MCF 10A (cell line): ENCODE measurements at regions of chr2 and their contacts with region 1.

Region 1: DNA sequence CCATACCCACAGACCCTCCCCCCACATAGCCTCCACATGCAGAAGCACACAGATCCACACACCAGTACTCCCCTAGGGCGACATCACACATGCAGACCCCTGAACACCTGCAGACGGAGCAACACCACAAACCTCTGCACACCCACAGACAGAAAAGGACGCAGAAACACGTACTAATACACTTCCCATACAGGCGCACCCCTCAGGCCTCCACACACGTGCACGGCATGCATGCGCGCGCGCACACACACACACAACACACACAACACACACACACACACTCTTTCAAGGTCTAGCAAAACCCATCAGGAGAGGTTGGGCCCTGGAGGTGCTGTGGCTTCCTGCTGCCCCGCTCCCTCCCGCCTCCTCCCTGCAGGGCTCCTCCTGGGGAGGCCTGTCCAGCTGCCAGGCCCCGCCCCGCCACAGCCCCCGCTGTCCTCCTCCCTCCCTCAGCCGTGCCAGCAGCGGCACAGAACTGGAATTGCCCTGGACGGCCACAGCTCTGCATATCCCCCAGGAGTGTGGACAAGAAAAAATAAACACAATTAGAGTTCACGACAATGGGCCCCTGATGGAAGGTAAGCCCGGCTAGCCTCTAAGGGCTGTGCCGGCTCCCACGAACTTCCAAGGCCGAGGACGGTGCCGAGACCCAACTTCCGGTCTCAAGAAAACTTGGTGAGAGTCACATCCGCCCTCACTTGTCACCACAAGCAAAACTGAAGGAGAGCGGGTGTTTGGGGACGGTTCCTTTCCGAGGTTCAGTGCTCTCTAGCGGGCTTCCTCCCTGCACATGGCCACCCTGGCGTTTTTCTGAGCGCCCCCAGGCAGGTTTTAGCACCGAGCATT is 6.8 kb downstream of the ZFP36L2 start:
- DNase-seq: peak; percentile 88
- H3K4me3 Mint-ChIP-seq: peak overlapping the region; percentile 93
- H3K27ac Mint-ChIP-seq: peak overlapping the region; percentile 83
- H3K4me1 Mint-ChIP-seq: peaks cover 22% of the 10 kb centered on the region
- H3K27me3 Mint-ChIP-seq: no peaks in the 10 kb centered on the region
- CTCF ChIP-seq: no peak

Region 2: GRCh38 chr2:42844901-42845821 is 374.4 kb before region 1 on chr2:
- CTCF ChIA-PET with region 1: no interaction called
- POLR2A ChIA-PET with region 1: no interaction called
- intact Hi-C with region 1: no loop called
- DNase-seq: no peak
- H3K4me3 Mint-ChIP-seq: no peak overlapping the region
- H3K27ac Mint-ChIP-seq: peak overlapping the region; percentile 32
- H3K4me1 Mint-ChIP-seq: peaks cover 6% of the 10 kb centered on the region
- H3K27me3 Mint-ChIP-seq: no peaks in the 10 kb centered on the region
- CTCF ChIP-seq: no peak

Region 3: DNA sequence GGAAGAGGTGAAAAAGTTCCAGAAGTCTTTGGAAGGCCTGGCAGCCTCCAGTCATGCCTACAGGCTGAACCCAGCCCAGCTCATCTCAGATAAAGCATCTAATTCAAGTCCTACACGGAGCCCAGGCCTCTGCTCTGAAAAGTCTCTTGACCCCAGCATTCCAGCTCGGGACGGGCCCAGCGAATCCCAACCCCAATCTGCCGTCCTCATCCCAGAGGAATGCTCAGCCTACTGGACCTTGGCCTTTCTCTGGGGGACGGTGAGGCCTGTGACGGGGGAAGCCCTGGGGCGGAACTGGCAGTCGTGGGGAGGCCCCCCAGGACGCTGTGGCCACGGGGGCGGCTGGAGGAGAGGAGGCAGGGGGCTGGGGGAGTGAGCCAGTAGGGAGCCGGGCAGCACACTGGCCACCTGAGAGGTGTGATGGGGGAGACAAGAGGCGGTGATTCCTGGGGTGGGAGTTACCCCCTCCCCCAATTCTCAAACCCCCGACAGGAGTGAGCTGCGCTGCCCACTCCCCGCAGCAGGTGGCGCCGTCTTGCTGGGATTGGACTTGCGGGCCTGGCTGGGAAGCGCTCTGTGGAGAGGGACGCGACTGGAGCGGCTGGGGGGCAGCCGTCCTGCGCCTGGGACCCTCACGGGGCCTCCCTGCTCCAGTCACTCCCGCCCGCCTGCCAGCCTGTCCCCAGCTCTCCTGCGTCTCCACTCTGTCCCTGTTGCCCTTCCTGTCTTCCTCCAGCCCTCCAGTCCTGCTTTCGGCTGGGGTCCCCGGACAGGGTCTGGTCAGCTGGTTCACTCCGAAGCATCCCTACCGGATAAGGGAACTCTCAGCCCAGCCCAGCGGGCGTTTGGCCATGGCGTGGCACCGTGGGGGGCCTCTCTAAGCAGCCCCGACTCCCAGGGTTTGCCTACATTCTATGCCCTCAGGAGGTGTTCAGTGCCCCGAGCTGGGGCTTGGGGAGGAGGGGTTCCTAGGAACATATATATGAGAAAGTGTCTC is 244.6 kb before region 1 on chr2:
- CTCF ChIA-PET with region 1: interaction called, 23 read pairs
- POLR2A ChIA-PET with region 1: interaction called, 11 read pairs
- intact Hi-C with region 1: no loop called
- DNase-seq: peak; percentile 64
- H3K4me3 Mint-ChIP-seq: no peak overlapping the region
- H3K27ac Mint-ChIP-seq: peak overlapping the region; percentile 52
- H3K4me1 Mint-ChIP-seq: peaks cover 38% of the 10 kb centered on the region
- H3K27me3 Mint-ChIP-seq: no peaks in the 10 kb centered on the region
- CTCF ChIP-seq: peak; percentile 95

Region 4: GRCh38 chr2:43024515-43025011 is 195.0 kb before region 1 on chr2:
- CTCF ChIA-PET with region 1: interaction called, 4 read pairs
- POLR2A ChIA-PET with region 1: interaction called, 8 read pairs
- intact Hi-C with region 1: loop called (anchors 2 kb)
- DNase-seq: peak; percentile 75
- H3K4me3 Mint-ChIP-seq: no peak overlapping the region
- H3K27ac Mint-ChIP-seq: no peak overlapping the region
- H3K4me1 Mint-ChIP-seq: peaks cover 29% of the 10 kb centered on the region
- H3K27me3 Mint-ChIP-seq: no peaks in the 10 kb centered on the region
- CTCF ChIP-seq: peak; percentile 75

Region 5: GRCh38 chr2:43086451-43087221 is 133.0 kb before region 1 on chr2:
- CTCF ChIA-PET with region 1: interaction called, 4 read pairs
- POLR2A ChIA-PET with region 1: interaction called, 54 read pairs
- intact Hi-C with region 1: loop called (anchors 5 kb)
- DNase-seq: peak; percentile 98
- H3K4me3 Mint-ChIP-seq: peak overlapping the region; percentile 48
- H3K27ac Mint-ChIP-seq: peak overlapping the region; percentile 94
- H3K4me1 Mint-ChIP-seq: peaks cover 60% of the 10 kb centered on the region
- H3K27me3 Mint-ChIP-seq: no peaks in the 10 kb centered on the region
- CTCF ChIP-seq: no peak

Region 6: DNA sequence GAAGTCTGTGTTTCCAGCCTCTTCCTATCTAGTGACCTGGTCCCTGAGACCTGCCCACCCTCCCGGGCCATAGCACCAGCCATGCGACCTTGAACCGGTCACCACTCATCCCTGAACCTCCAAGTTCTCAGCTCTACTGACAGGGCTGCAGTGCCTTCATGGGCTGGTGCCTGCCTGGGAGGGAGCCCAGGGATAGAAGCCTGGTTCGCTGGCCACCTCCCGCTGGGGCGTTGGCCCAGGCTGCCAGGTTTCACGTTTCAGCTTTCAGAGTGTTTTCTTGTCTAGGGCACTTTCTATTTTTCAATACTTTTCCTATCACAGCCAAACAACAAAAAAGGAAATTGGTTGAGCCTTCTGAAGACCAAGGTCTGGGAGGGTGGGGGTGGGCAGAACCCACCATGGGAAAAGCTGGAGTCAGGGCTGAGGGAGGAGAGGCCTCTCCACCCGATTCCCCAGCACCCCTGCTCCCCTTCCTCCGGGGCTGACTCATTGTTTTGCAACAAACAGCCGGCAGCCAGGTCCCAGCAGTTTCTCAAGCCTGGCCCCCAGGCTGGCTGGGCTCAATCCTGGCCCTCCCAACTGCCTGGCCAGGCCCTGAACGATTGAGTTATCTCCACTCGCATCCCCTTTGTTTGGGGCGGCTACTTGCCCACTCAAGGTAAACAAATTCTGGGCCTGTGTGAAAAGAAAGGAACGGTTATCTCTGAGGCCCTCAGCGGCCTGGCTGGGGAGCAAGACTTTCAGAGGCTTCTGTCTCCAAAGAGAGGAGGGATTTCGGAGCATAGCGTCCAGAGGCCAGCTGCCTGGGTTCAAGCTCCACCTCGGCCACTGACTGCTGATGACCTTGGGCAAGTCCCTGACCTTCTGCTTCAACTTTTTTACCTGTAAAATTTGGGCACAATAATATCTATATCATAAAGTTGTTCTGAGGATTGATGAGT is 40.7 kb before region 1 on chr2:
- CTCF ChIA-PET with region 1: interaction called, 59 read pairs
- POLR2A ChIA-PET with region 1: interaction called, 329 read pairs
- intact Hi-C with region 1: loop called (anchors 2 kb)
- DNase-seq: peak; percentile 95
- H3K4me3 Mint-ChIP-seq: peak overlapping the region; percentile 39
- H3K27ac Mint-ChIP-seq: peak overlapping the region; percentile 99
- H3K4me1 Mint-ChIP-seq: peaks cover 47% of the 10 kb centered on the region
- H3K27me3 Mint-ChIP-seq: no peaks in the 10 kb centered on the region
- CTCF ChIP-seq: no peak

Region 7: GRCh38 chr2:43279458-43279861 is 59.9 kb after region 1 on chr2:
- CTCF ChIA-PET with region 1: no interaction called
- POLR2A ChIA-PET with region 1: no interaction called
- intact Hi-C with region 1: no loop called
- DNase-seq: no peak
- H3K4me3 Mint-ChIP-seq: no peak overlapping the region
- H3K27ac Mint-ChIP-seq: no peak overlapping the region
- H3K4me1 Mint-ChIP-seq: peaks cover 10% of the 10 kb centered on the region
- H3K27me3 Mint-ChIP-seq: no peaks in the 10 kb centered on the region
- CTCF ChIP-seq: no peak

Region 8: GRCh38 chr2:43343573-43344304 is 124.1 kb after region 1 on chr2:
- CTCF ChIA-PET with region 1: no interaction called
- POLR2A ChIA-PET with region 1: no interaction called
- intact Hi-C with region 1: no loop called
- DNase-seq: peak; percentile 33
- H3K4me3 Mint-ChIP-seq: no peak overlapping the region
- H3K27ac Mint-ChIP-seq: no peak overlapping the region
- H3K4me1 Mint-ChIP-seq: peaks cover 28% of the 10 kb centered on the region
- H3K27me3 Mint-ChIP-seq: no peaks in the 10 kb centered on the region
- CTCF ChIP-seq: no peak

Region 9: GRCh38 chr2:43464590-43464989 is 245.0 kb after region 1 on chr2:
- CTCF ChIA-PET with region 1: interaction called, 4 read pairs
- POLR2A ChIA-PET with region 1: interaction called, 21 read pairs
- intact Hi-C with region 1: no loop called
- DNase-seq: peak; percentile 59
- H3K4me3 Mint-ChIP-seq: peak overlapping the region; percentile 35
- H3K27ac Mint-ChIP-seq: peak overlapping the region; percentile 95
- H3K4me1 Mint-ChIP-seq: peaks cover 56% of the 10 kb centered on the region
- H3K27me3 Mint-ChIP-seq: no peaks in the 10 kb centered on the region
- CTCF ChIP-seq: no peak

Region 10: GRCh38 chr2:43519643-43520221 is 300.1 kb after region 1 on chr2:
- CTCF ChIA-PET with region 1: no interaction called
- POLR2A ChIA-PET with region 1: interaction called, 13 read pairs
- intact Hi-C with region 1: no loop called
- DNase-seq: peak; percentile 84
- H3K4me3 Mint-ChIP-seq: peak overlapping the region; percentile 41
- H3K27ac Mint-ChIP-seq: peak overlapping the region; percentile 71
- H3K4me1 Mint-ChIP-seq: peaks cover 47% of the 10 kb centered on the region
- H3K27me3 Mint-ChIP-seq: no peaks in the 10 kb centered on the region
- CTCF ChIP-seq: no peak